PC-3 (cell line): ENCODE measurements at regions of chr19 and their contacts with region 1.

Region 1: GRCh38 chr19:8252922-8253589 is 43.9 kb downstream of the CERS4 start:
- DNase-seq: peak; percentile 91
- ATAC-seq: peak; percentile 91
- H3K4me3 ChIP-seq: no peak overlapping the region
- H3K27ac ChIP-seq: no peak overlapping the region
- H3K4me1 ChIP-seq: no peaks in the 10 kb centered on the region
- H3K27me3 ChIP-seq: no peaks in the 10 kb centered on the region
- CTCF ChIP-seq: peak; percentile 98

Region 2: GRCh38 chr19:7943444-7944176 is 309.4 kb before region 1 on chr19 and contains the start of gene TIMM44:
- CTCF ChIA-PET with region 1: no interaction called
- POLR2A ChIA-PET with region 1: no interaction called
- intact Hi-C with region 1: loop called (anchors 1 kb)
- DNase-seq: peak; percentile 100
- ATAC-seq: peak; percentile 98
- H3K4me3 ChIP-seq: peak within 1 kb of the TSS; percentile 91
- H3K27ac ChIP-seq: peak within 1 kb of the TSS; percentile 75
- H3K4me1 ChIP-seq: peaks cover 14% of the 10 kb centered on the region
- H3K27me3 ChIP-seq: no peaks in the 10 kb centered on the region
- CTCF ChIP-seq: no peak
- total RNA-seq, gene TIMM44: 191 and 262 TPM in 2 replicates

Region 3: GRCh38 chr19:8095903-8096470 is 157.1 kb before region 1 on chr19:
- CTCF ChIA-PET with region 1: no interaction called
- POLR2A ChIA-PET with region 1: no interaction called
- intact Hi-C with region 1: no loop called
- DNase-seq: peak; percentile 19
- ATAC-seq: no peak
- H3K4me3 ChIP-seq: no peak overlapping the region
- H3K27ac ChIP-seq: no peak overlapping the region
- H3K4me1 ChIP-seq: no peaks in the 10 kb centered on the region
- H3K27me3 ChIP-seq: no peaks in the 10 kb centered on the region
- CTCF ChIP-seq: peak; percentile 58

Region 4: GRCh38 chr19:8144273-8144995 is 108.6 kb before region 1 on chr19:
- CTCF ChIA-PET with region 1: interaction called, 10 read pairs
- POLR2A ChIA-PET with region 1: no interaction called
- intact Hi-C with region 1: no loop called
- DNase-seq: no peak
- ATAC-seq: no peak
- H3K4me3 ChIP-seq: no peak overlapping the region
- H3K27ac ChIP-seq: no peak overlapping the region
- H3K4me1 ChIP-seq: 0 out of 2 replicates have a peak, but pooled peaks cover 4% of the 10 kb centered on the region
- H3K27me3 ChIP-seq: peaks cover 22% of the 10 kb centered on the region
- CTCF ChIP-seq: no peak

Region 5: GRCh38 chr19:8158411-8159074 is 94.5 kb before region 1 on chr19:
- CTCF ChIA-PET with region 1: interaction called, 5 read pairs
- POLR2A ChIA-PET with region 1: interaction called, 8 read pairs
- intact Hi-C with region 1: loop called (anchors 1 kb)
- DNase-seq: peak; percentile 91
- ATAC-seq: peak; percentile 55
- H3K4me3 ChIP-seq: no peak overlapping the region
- H3K27ac ChIP-seq: no peak overlapping the region
- H3K4me1 ChIP-seq: peaks cover 20% of the 10 kb centered on the region
- H3K27me3 ChIP-seq: no peaks in the 10 kb centered on the region
- CTCF ChIP-seq: peak; percentile 89